ENCODE measurements at regions of chr9 and their contacts with region 1.

Region 1: DNA sequence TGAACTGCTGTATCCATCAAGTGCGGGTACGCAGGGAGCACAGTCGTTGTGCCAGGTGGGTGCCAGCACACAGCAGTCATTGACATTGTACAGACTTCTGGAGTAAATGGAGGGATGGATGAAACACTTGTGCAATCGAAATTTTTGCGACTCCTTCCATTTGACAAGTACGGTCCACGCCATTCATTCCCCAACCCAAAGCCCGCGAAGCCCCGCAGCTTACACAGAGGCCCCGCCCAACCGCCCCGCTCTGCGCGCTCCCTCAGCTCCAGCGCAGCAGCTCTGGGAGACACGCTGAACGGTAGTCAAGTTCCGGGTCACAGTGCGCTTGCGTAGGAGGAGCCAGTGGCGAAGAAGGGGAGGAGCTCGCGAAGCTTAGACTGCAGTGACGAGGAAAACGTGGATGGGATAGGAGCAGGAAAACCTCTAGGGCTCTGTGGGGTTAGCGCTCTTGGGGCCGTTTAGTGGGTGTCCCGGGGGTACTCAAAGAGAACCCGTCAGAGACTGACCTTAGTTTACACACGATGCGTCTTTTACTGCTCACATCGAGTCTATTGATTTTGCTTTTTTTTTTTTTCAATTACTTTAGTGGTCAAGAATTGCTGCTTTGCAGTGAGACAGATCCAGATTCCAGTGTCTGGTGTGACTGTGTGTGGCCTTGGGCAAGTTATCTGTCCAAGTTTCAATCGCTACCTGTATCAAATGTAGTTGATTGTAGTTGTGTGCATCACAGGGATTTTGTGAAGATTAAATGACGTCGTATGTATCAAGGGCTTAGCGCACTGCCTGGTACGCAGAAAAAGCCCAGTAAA is 15.3 kb upstream of the MSANTD3 start:
- DNase-seq: peak; percentile 92
- ATAC-seq: peak; percentile 100
- H3K4me3 Mint-ChIP-seq: peak overlapping the region; percentile 70
- H3K27ac Mint-ChIP-seq: peak overlapping the region; percentile 74
- H3K4me1 Mint-ChIP-seq: peaks cover 15% of the 10 kb centered on the region
- H3K27me3 Mint-ChIP-seq: peaks cover 14% of the 10 kb centered on the region

Region 2: DNA sequence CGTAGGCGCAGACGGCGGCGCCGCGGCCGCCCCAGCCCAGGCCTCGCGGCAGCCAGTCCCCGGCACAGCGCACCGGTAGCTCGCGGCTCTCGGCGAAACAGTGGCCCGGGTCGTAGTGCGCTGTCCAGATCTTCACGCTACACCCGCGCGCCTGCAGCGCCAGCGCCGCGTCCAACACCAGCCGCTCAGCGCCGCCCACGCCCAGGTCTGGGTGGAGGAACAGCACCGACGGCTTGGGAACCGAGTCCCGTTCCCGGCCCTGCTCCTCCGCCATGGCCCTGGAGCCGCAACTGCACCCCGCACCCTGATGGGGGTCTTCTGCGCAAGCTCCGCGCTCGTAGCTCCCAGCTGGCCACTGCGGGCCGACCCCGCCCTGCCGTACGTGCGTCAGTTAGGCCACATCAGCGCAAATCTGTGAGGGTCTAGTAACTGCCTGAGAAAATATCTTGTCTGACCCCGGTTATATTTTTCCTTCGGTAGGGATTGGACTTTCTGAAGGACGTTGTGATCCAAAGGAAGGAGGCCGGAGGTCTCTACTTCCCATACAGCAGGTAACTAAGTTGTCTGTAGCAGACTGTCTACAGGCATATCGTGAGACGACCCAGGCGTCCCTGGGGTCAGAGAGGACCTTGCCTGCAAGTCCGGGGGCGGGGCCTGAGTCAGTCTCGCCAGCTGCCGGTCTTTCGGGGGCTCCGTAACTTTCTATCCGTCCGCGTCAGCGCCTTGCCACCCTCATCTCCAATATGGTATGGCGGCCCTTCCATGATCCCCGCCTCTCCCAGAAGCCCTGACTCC is 1189.9 kb before region 1 on chr9 and contains the starts of genes ALG2 and SEC61B:
- CTCF ChIA-PET with region 1: no interaction called
- POLR2A ChIA-PET with region 1: no interaction called
- intact Hi-C with region 1: loop called in 1 of 2 experiments (anchors 5 kb)
- DNase-seq: peak; percentile 97
- ATAC-seq: peak; percentile 94
- H3K4me3 Mint-ChIP-seq: peak within 1 kb of the TSS; percentile 99
- H3K27ac Mint-ChIP-seq: peak within 1 kb of the TSS; percentile 99
- H3K4me1 Mint-ChIP-seq: peaks cover 67% of the 10 kb centered on the region
- H3K27me3 Mint-ChIP-seq: no peaks in the 10 kb centered on the region
- total RNA-seq, gene ALG2: 22.8 to 31.1 TPM
- total RNA-seq, gene SEC61B: 81.0 to 139 TPM

Region 3: DNA sequence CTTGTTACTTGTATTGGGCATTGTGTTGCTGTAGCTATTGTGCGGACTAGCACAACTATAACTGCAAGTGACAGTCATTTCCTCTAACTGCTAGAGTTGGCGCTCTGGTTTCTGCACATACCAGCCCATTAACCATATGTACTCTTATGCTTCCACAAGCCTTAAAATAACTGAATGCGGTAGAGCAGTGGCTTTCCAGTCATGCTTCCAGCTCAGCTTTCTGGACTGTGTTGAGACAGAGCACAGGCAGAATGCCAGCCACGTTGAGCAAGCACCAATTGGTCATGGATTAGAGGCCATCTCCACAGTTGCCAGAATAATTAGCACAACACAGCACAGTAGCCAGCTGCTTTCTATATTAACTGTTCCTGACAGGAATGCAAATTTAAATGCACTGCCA is 300.4 kb before region 1 on chr9:
- CTCF ChIA-PET with region 1: no interaction called
- POLR2A ChIA-PET with region 1: no interaction called
- intact Hi-C with region 1: no loop called
- DNase-seq: no peak
- ATAC-seq: no peak
- H3K4me3 Mint-ChIP-seq: no peak overlapping the region
- H3K27ac Mint-ChIP-seq: no peak overlapping the region
- H3K4me1 Mint-ChIP-seq: peaks cover 4% of the 10 kb centered on the region
- H3K27me3 Mint-ChIP-seq: no peaks in the 10 kb centered on the region

Region 4: DNA sequence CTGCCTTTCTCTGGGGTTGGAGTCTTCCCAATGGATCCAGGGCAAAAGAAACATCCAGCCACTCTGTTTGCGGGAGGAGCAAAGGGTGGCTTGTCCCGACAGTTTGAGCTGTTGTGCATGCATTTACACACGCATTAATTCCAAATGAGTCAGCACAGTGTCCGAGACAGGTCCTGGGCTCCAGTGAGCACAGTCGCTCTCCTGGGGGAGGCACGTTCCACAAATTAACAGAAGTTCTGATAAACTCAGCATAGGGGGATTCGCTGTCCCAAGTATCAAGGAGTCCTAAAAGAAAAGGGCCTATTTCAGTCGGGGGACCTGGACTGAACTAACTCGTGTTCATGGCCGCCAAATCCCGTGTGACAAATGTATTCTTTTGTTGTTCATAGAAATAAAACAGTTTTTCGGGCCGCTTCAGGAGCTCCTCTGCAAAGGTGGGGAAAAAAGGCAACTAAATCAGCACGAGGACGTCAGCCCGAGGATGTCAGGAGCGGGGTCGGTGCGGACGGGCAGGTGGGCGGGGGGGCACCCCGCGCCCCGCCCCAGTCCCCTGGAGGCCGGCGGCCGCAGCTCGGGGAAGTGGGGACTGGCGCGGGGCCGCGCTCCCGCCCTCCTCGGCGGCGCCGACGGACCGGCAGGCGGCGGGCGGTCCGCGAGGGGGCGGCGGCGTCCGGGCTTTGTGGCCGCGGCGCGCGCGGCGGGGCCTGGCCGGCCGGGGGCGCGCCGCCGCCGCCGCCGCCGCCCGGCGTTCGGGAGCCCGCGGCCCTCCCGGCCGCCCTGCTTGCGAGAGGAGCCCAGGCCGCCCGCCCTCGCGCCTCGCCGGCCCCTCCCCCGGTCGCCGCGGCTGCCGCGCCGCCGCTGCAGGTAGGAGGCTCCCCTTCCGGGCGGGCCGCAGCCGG is 15.1 kb after region 1 on chr9 and contains the start of gene MSANTD3:
- CTCF ChIA-PET with region 1: interaction called, 4 read pairs
- POLR2A ChIA-PET with region 1: interaction called, 3 read pairs
- intact Hi-C with region 1: loop called (anchors 1 to 2 kb)
- DNase-seq: peak; percentile 71
- ATAC-seq: peak; percentile 74
- H3K4me3 Mint-ChIP-seq: peak within 1 kb of the TSS; percentile 81
- H3K27ac Mint-ChIP-seq: peak within 1 kb of the TSS; percentile 91
- H3K4me1 Mint-ChIP-seq: peaks cover 30% of the 10 kb centered on the region
- H3K27me3 Mint-ChIP-seq: no peaks in the 10 kb centered on the region
- total RNA-seq, gene MSANTD3: 17.9 to 21.6 TPM

Region 5: GRCh38 chr9:101398068-101398929 is 986.6 kb after region 1 on chr9 and contains the starts of genes MRPL50 and ZNF189:
- CTCF ChIA-PET with region 1: no interaction called
- POLR2A ChIA-PET with region 1: no interaction called
- intact Hi-C with region 1: loop called in 1 of 2 experiments (anchors 5 kb)
- DNase-seq: peak; percentile 98
- ATAC-seq: peak; percentile 97
- H3K4me3 Mint-ChIP-seq: peak within 1 kb of the TSS; percentile 94
- H3K27ac Mint-ChIP-seq: peak within 1 kb of the TSS; percentile 100
- H3K4me1 Mint-ChIP-seq: peaks cover 67% of the 10 kb centered on the region
- H3K27me3 Mint-ChIP-seq: no peaks in the 10 kb centered on the region
- total RNA-seq, gene MRPL50: 15.5 to 17.0 TPM
- total RNA-seq, gene ZNF189: 10.2 to 13.1 TPM